Activated CD4-positive, alpha-beta T cell treated with anti-CD3 and anti-CD28 coated beads for 36 hours (primary cell): ENCODE measurements at regions of chr2 and their contacts with region 1.

Region 1: GRCh38 chr2:218852911-218853667 is 6.5 kb upstream of the WNT6 start:
- DNase-seq: peak; percentile 81
- ATAC-seq: peak; percentile 84
- H3K4me3 Mint-ChIP-seq: no peak overlapping the region
- H3K27ac Mint-ChIP-seq: no peak overlapping the region
- H3K4me1 Mint-ChIP-seq: no peaks in the 10 kb centered on the region
- H3K27me3 Mint-ChIP-seq: peaks cover 54% of the 10 kb centered on the region

Region 2: GRCh38 chr2:218406209-218406948 is 446.7 kb before region 1 on chr2:
- CTCF ChIA-PET with region 1: no interaction called
- POLR2A ChIA-PET with region 1: interaction called, 3 read pairs
- intact Hi-C with region 1: loop called in 1 of 2 experiments (anchors 5 kb)
- DNase-seq: peak; percentile 97
- ATAC-seq: peak; percentile 88
- H3K4me3 Mint-ChIP-seq: peak overlapping the region; percentile 75
- H3K27ac Mint-ChIP-seq: peak overlapping the region; percentile 90
- H3K4me1 Mint-ChIP-seq: peaks cover 38% of the 10 kb centered on the region
- H3K27me3 Mint-ChIP-seq: peaks cover 5% of the 10 kb centered on the region

Region 3: GRCh38 chr2:218516614-218517013 is 336.5 kb before region 1 on chr2:
- CTCF ChIA-PET with region 1: no interaction called
- POLR2A ChIA-PET with region 1: no interaction called
- intact Hi-C with region 1: no loop called
- DNase-seq: peak; percentile 10
- ATAC-seq: peak; percentile 73
- H3K4me3 Mint-ChIP-seq: no peak overlapping the region
- H3K27ac Mint-ChIP-seq: no peak overlapping the region
- H3K4me1 Mint-ChIP-seq: peaks cover 30% of the 10 kb centered on the region
- H3K27me3 Mint-ChIP-seq: no peaks in the 10 kb centered on the region

Region 4: DNA sequence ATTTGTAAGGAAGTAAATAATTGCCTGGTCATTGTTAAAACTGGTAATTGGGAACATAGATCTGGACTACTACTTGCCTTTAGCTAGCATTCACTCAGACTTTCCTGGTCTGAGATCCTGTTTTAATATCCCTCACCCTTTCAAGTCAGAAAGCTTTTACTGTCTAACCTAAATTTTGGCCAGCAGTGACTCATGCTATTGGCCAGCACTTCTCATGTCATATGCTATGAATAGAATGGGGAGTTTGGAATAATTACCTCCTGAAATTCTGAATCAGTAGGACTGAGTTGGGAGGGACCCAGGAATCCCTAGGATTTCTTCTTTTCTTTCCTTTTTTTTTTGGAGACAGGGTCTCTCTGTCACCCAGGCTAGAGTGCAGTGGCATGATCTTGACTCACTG is 161.9 kb before region 1 on chr2:
- CTCF ChIA-PET with region 1: interaction called, 13 read pairs
- POLR2A ChIA-PET with region 1: interaction called, 3 read pairs
- intact Hi-C with region 1: no loop called
- DNase-seq: no peak
- ATAC-seq: no peak
- H3K4me3 Mint-ChIP-seq: no peak overlapping the region
- H3K27ac Mint-ChIP-seq: no peak overlapping the region
- H3K4me1 Mint-ChIP-seq: peaks cover 2% of the 10 kb centered on the region
- H3K27me3 Mint-ChIP-seq: no peaks in the 10 kb centered on the region

Region 5: DNA sequence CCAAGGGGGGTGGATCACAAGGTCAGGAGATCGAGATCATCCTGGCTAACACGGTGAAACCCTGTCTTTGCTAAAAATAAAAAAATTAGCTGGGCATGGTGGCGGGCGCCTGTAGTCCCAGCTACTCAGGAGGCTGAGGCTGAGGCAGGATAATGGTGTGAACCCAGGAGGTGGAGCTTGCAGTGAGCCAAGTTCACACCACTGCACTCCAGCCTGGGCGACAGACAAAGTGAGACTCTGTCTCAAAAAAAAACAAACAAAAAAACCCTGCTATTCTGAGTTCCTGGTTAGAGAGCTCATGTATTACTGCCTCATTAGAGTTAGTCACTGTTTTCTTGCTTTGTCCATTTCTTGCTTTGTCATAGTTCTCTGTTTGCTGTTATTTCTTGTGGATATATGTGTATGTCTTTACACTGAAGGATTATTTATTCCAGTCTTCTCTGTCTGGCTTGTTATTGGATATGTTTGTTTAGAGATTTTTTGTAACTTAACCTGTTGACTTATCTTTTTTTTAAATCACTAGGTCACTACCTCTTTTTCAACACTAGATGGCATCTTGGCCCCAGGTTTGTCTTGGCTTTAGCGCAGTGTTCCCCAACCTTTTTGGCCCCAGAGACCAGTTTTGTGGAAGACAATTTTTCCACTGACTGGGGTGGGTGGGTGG is 125.5 kb before region 1 on chr2:
- CTCF ChIA-PET with region 1: interaction called, 69 read pairs
- POLR2A ChIA-PET with region 1: no interaction called
- intact Hi-C with region 1: no loop called
- DNase-seq: peak; percentile 23
- ATAC-seq: no peak
- H3K4me3 Mint-ChIP-seq: no peak overlapping the region
- H3K27ac Mint-ChIP-seq: no peak overlapping the region
- H3K4me1 Mint-ChIP-seq: peaks cover 25% of the 10 kb centered on the region
- H3K27me3 Mint-ChIP-seq: no peaks in the 10 kb centered on the region

Region 6: GRCh38 chr2:218870984-218871344 is 17.9 kb after region 1 on chr2:
- CTCF ChIA-PET with region 1: interaction called, 41 read pairs
- POLR2A ChIA-PET with region 1: interaction called, 3 read pairs
- intact Hi-C with region 1: loop called in 1 of 2 experiments (anchors 2 kb)
- DNase-seq: no peak
- ATAC-seq: no peak
- H3K4me3 Mint-ChIP-seq: peak overlapping the region; percentile 44
- H3K27ac Mint-ChIP-seq: no peak overlapping the region
- H3K4me1 Mint-ChIP-seq: peaks cover 17% of the 10 kb centered on the region
- H3K27me3 Mint-ChIP-seq: peaks cover 53% of the 10 kb centered on the region

Region 7: DNA sequence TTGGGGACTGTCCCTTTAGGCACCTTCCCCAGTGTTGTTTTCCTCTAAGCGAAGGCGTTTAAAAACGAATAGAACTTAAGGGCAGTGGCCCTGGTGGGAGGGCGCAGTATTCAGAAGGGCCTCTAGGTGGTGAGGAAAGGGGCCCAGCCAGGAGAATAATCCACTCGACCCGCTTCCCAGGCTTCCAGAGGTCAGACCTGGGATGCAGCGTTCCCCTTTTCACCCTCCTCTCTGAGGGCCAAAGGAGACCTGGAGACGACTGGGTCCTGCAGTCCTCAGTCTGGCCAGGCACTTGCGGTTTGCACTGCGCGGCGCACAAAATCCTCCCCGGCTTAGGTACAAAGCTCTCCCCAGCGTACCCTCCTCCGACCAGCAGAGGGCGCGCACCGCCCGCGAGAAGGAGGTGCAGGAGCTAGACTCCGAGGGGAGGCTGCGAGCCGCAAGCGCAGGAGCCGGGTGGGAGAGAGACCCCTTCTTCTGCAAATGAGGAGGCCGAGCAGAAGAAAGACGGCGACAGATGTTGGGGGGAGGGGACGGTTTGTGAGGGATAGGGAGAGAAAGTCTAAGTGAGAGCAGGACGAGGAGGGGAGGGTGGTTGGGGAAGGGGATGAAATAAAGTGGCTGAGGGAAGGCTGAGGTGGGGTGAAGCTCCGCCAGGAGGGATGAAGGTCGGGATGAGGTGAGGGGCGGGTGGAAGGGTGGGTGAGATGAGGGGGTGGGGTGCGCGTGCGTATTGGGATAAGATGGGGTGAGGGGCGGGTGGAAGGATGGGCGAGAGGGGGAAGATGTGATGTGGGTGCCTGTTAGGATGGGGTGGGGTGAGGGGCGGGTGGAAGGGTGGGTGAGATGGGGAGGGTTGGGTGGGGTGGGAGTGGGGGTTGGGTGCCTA is 127.0 kb after region 1 on chr2:
- CTCF ChIA-PET with region 1: interaction called, 6 read pairs
- POLR2A ChIA-PET with region 1: no interaction called
- intact Hi-C with region 1: loop called (anchors 1 to 5 kb)
- DNase-seq: peak; percentile 93
- ATAC-seq: peak; percentile 90
- H3K4me3 Mint-ChIP-seq: peak overlapping the region; percentile 43
- H3K27ac Mint-ChIP-seq: no peak overlapping the region
- H3K4me1 Mint-ChIP-seq: peaks cover 28% of the 10 kb centered on the region
- H3K27me3 Mint-ChIP-seq: peaks cover 56% of the 10 kb centered on the region

Region 8: DNA sequence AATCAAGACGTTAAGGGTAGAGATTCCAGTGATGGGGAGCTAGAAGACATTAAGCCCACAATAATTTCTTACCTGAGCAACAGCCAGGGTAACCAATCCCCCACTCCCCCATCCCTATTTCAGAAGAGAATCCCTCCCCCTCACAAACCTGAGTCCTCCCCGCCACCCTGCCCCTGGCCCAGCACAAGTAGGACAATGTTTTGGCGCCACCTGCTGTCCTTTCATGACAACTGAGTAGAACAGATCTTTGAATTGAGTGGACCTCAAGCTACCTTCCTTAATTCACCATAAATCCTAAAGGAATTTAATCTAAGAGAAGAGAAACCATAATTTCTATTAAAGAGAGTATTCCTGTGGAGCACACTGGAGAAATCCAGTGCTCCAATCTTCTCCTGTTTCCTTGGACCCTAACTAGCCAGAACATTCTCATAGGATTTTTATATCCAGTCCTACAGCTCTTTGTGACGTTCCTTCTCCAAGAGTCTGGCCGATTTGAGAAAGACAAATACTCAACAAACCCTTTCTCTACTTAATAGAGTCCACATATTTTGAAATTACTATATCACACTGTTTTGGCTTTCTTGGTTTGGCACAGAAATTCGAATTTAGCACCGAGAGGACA is 266.4 kb after region 1 on chr2:
- CTCF ChIA-PET with region 1: no interaction called
- POLR2A ChIA-PET with region 1: no interaction called
- intact Hi-C with region 1: loop called in 1 of 2 experiments (anchors 5 kb)
- DNase-seq: peak; percentile 82
- ATAC-seq: peak; percentile 72
- H3K4me3 Mint-ChIP-seq: no peak overlapping the region
- H3K27ac Mint-ChIP-seq: no peak overlapping the region
- H3K4me1 Mint-ChIP-seq: peaks cover 6% of the 10 kb centered on the region
- H3K27me3 Mint-ChIP-seq: no peaks in the 10 kb centered on the region

Region 9: DNA sequence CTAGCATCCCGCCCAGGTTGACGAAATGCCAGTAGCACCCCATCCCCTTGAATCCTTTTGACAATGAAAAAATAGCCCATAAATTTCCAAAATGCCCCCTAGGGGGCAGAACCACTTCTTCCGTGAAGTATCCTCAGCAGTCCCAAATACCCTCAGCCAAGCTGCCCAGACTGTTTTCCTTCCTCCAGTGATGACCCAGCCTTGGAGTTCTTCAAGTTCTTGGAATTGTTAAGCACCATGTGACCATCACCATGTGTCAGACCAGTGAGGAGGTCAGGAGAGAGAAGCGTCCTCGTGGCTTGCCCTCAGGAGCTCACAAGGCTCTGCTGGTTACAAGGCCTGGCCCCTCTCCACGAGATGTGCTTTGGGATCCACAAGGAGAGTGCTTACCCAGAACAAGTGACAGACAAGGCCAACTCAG is 318.2 kb after region 1 on chr2:
- CTCF ChIA-PET with region 1: no interaction called
- POLR2A ChIA-PET with region 1: no interaction called
- intact Hi-C with region 1: no loop called
- DNase-seq: peak; percentile 39
- ATAC-seq: peak; percentile 64
- H3K4me3 Mint-ChIP-seq: no peak overlapping the region
- H3K27ac Mint-ChIP-seq: peak overlapping the region; percentile 2
- H3K4me1 Mint-ChIP-seq: peaks cover 31% of the 10 kb centered on the region
- H3K27me3 Mint-ChIP-seq: no peaks in the 10 kb centered on the region